Lower leg skin (tissue), 4 donors: ENCODE measurements at regions of chr1 and their contacts with region 1.

Region 1: DNA sequence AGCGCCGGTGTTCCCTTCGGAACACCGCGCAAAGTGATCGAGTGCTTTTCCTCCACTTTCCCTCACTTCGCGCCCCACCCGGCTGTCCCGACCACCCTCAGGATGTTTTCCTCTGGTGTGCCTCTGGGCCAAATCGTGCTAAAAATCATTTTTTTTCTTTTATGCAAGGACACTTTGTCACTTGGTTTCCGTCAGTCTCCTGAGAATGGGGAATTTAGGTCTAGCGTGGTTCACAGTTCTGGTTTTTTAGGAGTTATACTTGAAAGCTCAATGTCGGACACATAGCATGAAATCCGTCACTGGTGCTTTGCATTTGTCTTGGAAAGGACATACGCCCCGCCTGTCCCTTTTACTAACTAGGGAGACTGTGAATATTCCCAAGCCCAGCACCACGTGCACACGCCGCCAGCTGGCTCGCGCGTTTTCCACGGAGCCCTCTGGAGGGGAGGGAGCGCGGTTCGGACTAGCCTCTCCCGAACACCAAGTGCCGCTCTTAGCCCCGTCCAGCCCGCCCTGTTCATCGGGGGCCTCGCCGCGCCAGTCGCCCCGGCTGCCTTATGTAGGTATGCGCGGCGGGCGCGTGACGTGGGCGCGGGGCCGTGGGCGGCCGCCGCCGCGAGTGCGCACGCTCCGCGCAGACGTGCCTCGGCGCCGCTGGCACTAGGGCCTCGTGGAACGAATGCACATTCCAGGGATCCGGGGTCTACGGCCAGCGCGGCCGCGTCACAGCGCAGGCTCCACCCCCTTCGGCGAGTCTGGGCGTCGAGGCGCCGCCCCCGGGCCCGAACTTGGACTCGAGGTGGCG is 572 bp upstream of the IRF2BP2 start:
- DNase-seq: peak; percentile 92 to 99
- H3K4me3 ChIP-seq: peak overlapping the region; percentile 41
- CTCF ChIP-seq: no peak
- POLR2A ChIP-seq: peak in 1 of 2 donors; percentile 89

Region 2: GRCh38 chr1:234533975-234534876 is 76.3 kb before region 1 on chr1:
- intact Hi-C with region 1: loop called (anchors 5 kb)
- DNase-seq: peak; percentile 96 to 99
- H3K4me3 ChIP-seq: no peak overlapping the region
- CTCF ChIP-seq: no peak
- POLR2A ChIP-seq: no peak

Region 3: DNA sequence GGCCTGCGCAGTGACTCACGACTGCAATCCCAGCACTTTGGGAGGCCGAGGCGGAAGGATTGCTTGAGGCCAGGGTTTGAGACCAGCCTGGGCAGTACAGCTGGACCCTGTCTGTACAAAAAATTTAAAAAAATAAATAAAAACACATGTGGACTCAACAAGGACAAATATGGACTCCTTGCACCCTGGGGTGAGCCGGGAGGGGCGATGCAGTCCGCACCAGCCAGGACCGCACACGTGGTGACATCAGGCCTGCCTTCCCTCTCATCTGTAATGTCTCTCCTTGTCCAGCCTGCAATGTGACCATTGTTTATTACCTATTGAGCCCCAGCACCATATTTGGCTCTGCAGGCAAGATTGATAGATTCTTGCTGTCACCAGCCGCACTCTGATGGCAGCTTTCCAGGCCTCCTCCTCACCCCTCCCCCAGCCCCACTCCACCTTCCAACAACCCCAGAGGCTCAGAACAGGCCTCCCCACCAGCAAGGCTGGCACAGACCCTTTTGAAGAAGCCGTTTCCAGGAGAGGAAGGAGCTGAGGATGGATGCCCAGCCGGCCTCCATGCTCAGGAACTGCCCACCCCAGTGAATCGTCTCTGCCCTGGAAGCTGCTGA is 55.7 kb before region 1 on chr1:
- intact Hi-C with region 1: no loop called
- DNase-seq: peak in 1 of 2 donors; percentile 81
- H3K4me3 ChIP-seq: no peak overlapping the region
- CTCF ChIP-seq: no peak
- POLR2A ChIP-seq: no peak

Region 4: GRCh38 chr1:234722904-234723720 is 112.6 kb after region 1 on chr1:
- intact Hi-C with region 1: loop called (anchors 5 kb)
- DNase-seq: peak; percentile 87 to 96
- H3K4me3 ChIP-seq: no peak overlapping the region
- CTCF ChIP-seq: no peak
- POLR2A ChIP-seq: no peak

Region 5: DNA sequence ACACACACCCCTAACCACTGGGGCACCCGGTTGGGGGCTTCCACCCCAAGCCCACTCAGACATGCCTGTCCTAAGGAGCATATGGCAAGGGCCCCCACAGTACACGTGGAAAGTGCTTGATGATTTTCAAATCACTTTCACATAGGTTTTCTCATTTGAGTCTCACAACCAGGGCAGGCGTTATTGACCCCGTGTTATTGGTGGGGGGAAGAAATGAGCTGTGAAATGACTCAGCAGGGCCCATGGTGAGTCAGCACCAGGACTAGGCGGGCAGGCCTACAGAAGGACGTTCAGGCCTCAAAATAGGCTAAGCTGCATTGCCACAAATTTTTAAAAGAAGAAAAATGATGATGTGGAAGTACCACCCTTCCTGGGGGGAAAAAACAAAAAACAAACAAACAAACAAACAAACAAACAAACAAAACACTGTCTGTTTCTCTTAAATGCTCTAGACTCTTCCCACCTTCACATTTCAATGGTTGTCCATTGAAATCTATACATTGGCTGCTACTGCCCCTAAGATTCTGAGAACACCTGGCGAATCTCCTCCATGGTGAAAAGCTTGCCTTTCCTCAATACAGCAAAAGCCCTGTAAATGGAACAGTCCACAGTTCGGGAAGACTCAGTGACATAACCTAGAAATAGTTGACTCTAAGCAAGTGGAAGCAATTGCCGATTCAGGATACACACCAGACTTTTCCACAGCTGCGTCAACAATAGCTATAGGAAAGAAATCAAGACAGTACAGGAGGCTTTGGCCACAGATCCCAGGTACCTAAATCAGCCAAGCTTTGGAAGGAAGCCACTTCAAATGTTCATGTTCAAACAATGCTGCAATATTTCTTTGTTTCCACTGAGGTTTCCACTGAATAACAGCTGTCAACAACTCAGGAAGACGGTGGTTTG is 283.4 kb after region 1 on chr1:
- intact Hi-C with region 1: no loop called
- DNase-seq: no peak
- H3K4me3 ChIP-seq: no peak overlapping the region
- CTCF ChIP-seq: no peak
- POLR2A ChIP-seq: no peak

Region 6: GRCh38 chr1:235067263-235068172 is 457.0 kb after region 1 on chr1:
- intact Hi-C with region 1: loop called (anchors 5 kb)
- DNase-seq: peak; percentile 93 to 97
- H3K4me3 ChIP-seq: no peak overlapping the region
- CTCF ChIP-seq: no peak
- POLR2A ChIP-seq: no peak